Mammary epithelial cell (primary cell): ENCODE measurements at regions of chr14 and their contacts with region 1.

Region 1: GRCh38 chr14:63993992-63994391 is 141.2 kb downstream of the SYNE2 start:
- DNase-seq: peak; percentile 17
- H3K4me3 ChIP-seq: no peak overlapping the region
- H3K27ac ChIP-seq: no peak overlapping the region
- H3K4me1 ChIP-seq: peaks cover 13% of the 10 kb centered on the region
- H3K27me3 ChIP-seq: no peaks in the 10 kb centered on the region
- CTCF ChIP-seq: peak; percentile 16 to 47

Region 2: GRCh38 chr14:63788011-63788933 is 205.7 kb before region 1 on chr14:
- CTCF ChIA-PET with region 1: no interaction called
- dilution Hi-C with region 1: loop called (anchors 10 kb)
- in situ Hi-C with region 1: no loop called
- intact Hi-C with region 1: no loop called
- DNase-seq: no peak
- H3K4me3 ChIP-seq: no peak overlapping the region
- H3K27ac ChIP-seq: no peak overlapping the region
- H3K4me1 ChIP-seq: no peaks in the 10 kb centered on the region
- H3K27me3 ChIP-seq: peaks cover 1% of the 10 kb centered on the region
- CTCF ChIP-seq: no peak

Region 3: DNA sequence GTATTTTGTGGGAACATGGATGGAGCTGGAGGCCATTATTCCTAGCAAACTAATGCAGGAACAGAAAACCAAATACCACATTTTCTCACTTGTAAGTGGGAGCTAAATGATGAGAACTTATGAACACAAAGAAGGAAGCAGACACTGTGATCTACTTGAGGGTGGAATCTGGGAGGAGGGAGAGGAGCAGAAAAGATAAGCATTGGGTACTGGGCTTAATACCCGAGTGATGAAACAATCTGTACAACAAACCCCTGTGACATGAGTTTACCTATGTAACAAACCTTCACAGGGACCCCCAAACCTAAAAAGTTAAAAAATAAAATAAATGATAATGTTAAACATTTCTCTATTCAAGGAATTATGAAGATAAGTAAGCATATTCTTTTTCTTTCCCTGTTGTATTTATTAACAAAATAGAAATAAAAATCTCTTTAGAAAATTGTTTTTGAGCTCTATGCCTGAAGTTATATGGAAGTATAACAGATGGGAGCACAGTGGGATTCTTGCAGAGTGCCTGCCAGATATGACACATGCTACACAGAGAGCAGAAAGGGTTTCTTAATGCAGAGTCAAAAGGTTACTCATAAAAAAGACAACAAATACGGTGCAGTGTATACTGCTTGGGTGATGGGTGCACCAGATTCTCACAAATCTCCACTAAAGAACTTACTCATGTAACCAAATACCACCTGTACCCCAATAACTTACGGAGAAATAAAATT is 193.2 kb before region 1 on chr14:
- CTCF ChIA-PET with region 1: no interaction called
- dilution Hi-C with region 1: no loop called
- in situ Hi-C with region 1: no loop called
- intact Hi-C with region 1: loop called (anchors 1 kb)
- DNase-seq: no peak
- H3K4me3 ChIP-seq: no peak overlapping the region
- H3K27ac ChIP-seq: no peak overlapping the region
- H3K4me1 ChIP-seq: no peaks in the 10 kb centered on the region
- H3K27me3 ChIP-seq: no peaks in the 10 kb centered on the region
- CTCF ChIP-seq: no peak

Region 4: GRCh38 chr14:63922696-63923421 is 71.1 kb before region 1 on chr14:
- CTCF ChIA-PET with region 1: no interaction called
- dilution Hi-C with region 1: no loop called
- in situ Hi-C with region 1: no loop called
- intact Hi-C with region 1: loop called (anchors 2 kb)
- DNase-seq: peak; percentile 98
- H3K4me3 ChIP-seq: peak overlapping the region in 2 of 3 experiments; percentile 7 to 18
- H3K27ac ChIP-seq: peak overlapping the region; percentile 98
- H3K4me1 ChIP-seq: peaks cover 21% of the 10 kb centered on the region
- H3K27me3 ChIP-seq: no peaks in the 10 kb centered on the region
- CTCF ChIP-seq: no peak

Region 5: DNA sequence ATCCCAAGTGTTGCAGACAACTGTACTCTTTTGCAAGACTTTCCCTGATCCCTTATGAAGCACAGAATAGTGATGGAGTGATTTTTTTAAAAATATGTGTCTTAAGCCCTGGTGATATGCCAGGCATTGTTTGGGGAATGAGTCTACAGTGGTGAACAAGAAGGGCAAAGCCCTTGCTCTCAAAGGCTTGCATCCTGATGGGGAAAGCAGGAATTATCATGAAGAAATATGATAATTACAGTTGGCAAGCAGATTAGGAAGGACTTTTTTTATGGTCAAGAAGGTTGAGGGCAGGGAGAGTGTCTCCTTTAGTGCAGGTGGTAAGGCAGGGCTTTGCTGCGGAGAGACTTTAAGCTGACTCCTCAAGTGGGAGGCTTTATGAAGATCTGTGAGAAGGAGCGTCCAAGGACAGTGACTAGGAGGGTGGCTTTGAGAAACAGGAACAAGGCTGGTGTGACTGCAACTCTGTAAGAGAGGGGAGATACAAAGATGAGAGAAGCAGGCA is 41.0 kb before region 1 on chr14:
- CTCF ChIA-PET with region 1: no interaction called
- dilution Hi-C with region 1: loop called (anchors 5 kb)
- in situ Hi-C with region 1: no loop called
- intact Hi-C with region 1: no loop called
- DNase-seq: no peak
- H3K4me3 ChIP-seq: no peak overlapping the region
- H3K27ac ChIP-seq: no peak overlapping the region
- H3K4me1 ChIP-seq: no peaks in the 10 kb centered on the region
- H3K27me3 ChIP-seq: no peaks in the 10 kb centered on the region
- CTCF ChIP-seq: no peak